Transverse colon (tissue), 4 donors: ENCODE measurements at regions of chr22 and their contacts with region 1.

Region 1: DNA sequence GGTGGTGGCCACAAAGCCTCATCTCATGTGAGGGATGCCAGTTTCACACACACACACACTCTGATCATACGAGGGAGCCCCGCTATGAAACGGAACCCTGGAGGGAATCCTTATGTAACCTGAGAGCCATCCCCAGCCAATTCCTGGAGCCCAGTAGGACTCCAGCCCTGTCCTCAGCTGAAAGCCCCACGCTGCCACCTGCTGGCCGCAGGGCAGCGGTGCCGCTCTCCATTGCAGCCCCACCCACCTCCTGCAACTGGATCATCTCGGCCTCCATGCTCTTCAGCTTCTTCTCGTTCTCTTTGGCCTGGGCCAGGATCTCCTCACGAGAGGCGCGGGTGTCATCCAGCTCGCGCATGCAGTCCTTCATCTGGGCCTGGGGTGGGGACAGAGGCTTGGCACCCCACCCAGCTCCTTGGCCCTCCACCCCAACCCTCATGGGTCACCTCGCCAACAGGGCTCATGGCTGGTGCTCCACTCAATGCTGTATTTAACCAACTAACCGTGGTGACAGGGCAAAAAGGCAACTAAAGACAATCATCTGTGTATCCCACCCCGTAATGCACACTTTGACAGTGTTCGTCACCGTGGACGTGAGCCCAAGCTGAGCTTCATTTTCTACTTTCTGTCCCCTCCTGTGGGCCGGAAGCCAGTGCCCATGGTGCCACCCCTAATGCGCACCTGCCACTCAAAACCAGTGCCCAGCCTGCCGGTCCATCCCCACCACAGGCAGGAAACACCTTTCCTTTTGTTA is 33.7 kb downstream of the APOL1 start:
- DNase-seq: peak; percentile 75
- H3K4me3 ChIP-seq: no peak overlapping the region
- H3K27ac ChIP-seq: peak overlapping the region; percentile 63 to 81 (median 74)
- H3K4me1 ChIP-seq: peaks cover 0 to 10% (median 3%) of the 10 kb centered on the region in 4 donors
- H3K27me3 ChIP-seq: no peaks in the 10 kb centered on the region
- CTCF ChIP-seq: peak; percentile 84 to 96 (median 90)
- EP300 ChIP-seq: no peak
- POLR2A ChIP-seq: no peak

Region 2: GRCh38 chr22:36339171-36340065 is 52.8 kb after region 1 on chr22:
- in situ Hi-C with region 1: loop called in 1 of 4 experiments (anchors 10 kb)
- intact Hi-C with region 1: no loop called
- DNase-seq: no peak
- H3K4me3 ChIP-seq: no peak overlapping the region
- H3K27ac ChIP-seq: peak overlapping the region; percentile 92 to 99 (median 96)
- H3K4me1 ChIP-seq: peaks cover 55 to 88% (median 57%) of the 10 kb centered on the region in 4 donors
- H3K27me3 ChIP-seq: no peaks in the 10 kb centered on the region
- CTCF ChIP-seq: no peak
- EP300 ChIP-seq: no peak
- POLR2A ChIP-seq: no peak